Posterior vena cava (tissue), 2 donors: ENCODE measurements at regions of chr17 and their contacts with region 1.

Region 1: GRCh38 chr17:40362696-40363110 is 1.8 kb downstream of the GJD3 start:
- DNase-seq: peak; percentile 94

Region 2: GRCh38 chr17:40219073-40219860 is 143.4 kb before region 1 on chr17 and contains the start of gene WIPF2:
- intact Hi-C with region 1: loop called in 1 of 2 experiments (anchors 10 kb)
- DNase-seq: peak; percentile 99
- total RNA-seq, gene WIPF2: 24.8 to 28.9 TPM

Region 3: GRCh38 chr17:40322356-40323315 is 40.1 kb before region 1 on chr17:
- intact Hi-C with region 1: no loop called
- DNase-seq: peak; percentile 93

Region 4: GRCh38 chr17:40417609-40418427 is 55.1 kb after region 1 on chr17 and contains the start of gene TOP2A:
- intact Hi-C with region 1: loop called (anchors 5 to 10 kb)
- DNase-seq: peak; percentile 96
- total RNA-seq, gene TOP2A: 1.1 to 2.2 TPM

Region 5: DNA sequence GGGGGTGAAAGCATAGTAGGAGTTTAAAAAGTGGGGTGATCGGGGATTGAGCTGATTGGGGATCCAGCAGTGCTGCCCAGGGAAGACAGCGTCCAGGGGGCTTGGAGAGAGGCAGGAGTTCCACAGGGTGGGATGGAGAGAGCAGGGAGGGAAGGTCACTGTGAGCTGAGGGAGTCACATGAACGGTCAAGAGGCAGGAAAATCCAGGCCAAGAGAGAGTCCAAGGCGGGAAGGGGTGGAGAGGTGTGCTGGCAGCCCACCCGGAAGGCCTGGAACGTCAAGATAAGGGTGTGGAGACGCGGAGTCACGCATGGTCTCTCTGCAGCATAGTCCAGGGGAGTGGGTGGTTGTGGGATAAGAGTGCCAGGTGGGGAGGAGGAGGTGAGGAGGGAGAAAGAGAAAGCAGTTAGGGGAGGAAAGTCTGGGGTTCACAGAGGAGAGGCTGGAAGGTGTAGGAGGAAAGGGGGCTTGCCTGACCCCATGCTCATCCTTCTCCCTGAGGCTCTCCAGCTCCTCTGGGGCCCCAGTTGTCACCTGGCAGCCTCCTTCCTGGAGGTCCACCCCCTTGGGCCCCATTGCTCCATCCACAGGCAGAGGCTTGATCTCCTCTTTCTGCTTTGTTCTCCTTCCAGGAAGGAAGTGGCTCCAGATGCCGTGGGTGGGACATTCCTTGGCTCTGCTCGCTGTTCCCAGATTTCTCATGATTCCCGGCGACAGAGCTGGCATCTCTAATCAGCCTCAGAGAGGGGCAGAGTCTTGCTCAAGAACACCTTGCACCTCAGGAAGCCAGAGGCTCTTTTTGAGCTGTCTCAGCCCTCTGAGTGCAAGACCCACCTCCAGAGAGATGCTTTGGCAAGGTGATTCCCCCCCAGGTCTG is 173.8 kb after region 1 on chr17:
- intact Hi-C with region 1: loop called in 1 of 2 experiments (anchors 10 kb)
- DNase-seq: peak; percentile 88